ENCODE measurements at regions of chr9 and their contacts with region 1.

Region 1: GRCh38 chr9:137423004-137423874 is at the starts of genes EXD3 and NOXA1:
- DNase-seq: peak; percentile 91 to 94 (median 94)
- H3K4me3 ChIP-seq: peak within 1 kb of the TSS; percentile 69 to 90 (median 83)
- H3K27ac ChIP-seq: peak within 1 kb of the TSS; percentile 15 to 73
- H3K4me1 ChIP-seq: peaks cover 13 to 26% (median 22%) of the 10 kb centered on the region in 4 experiments
- H3K27me3 ChIP-seq: no peaks in the 10 kb centered on the region

Region 2: DNA sequence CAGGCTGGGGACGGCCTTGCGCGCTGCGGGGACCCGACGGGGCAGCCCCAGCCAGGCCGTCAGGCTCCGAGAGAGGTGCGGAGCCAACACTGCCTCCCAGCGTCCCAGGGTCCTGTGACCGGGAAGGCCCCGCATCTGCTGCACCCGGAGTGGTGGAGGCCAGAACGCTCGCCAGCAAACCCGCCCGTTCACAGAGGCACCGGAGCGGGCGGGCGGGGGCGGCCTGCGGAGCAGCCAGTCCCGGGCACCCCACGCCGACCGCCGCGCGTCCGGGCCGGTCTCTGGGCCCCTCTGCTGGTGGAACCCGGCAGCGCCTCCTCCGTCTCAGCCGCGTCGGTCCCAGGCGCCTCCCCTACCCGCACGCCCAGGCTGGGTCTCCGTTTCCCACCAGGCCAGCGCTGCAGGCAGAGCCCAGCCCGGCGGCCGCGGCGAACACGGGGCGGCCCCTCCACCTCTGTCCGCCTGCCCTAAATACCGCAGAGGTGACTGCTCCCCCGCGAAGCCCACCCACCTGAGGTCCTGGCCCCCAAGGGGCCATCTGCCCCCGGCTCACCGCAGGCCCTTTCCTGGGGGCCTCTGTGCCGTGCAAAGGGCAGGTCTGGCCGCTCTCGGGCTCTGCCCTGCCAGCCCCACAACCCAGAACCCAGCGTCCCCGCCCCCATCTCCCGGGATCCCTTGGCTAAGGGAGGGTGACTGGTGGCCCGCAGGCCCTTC is 16.2 kb before region 1 on chr9:
- CTCF ChIA-PET with region 1: interaction called, 15 read pairs
- POLR2A ChIA-PET with region 1: no interaction called
- DNase-seq: peak; percentile 63 to 83 (median 80)
- H3K4me3 ChIP-seq: peak overlapping the region in 5 of 7 experiments; percentile 4 to 61 (median 48)
- H3K27ac ChIP-seq: no peak overlapping the region
- H3K4me1 ChIP-seq: peaks cover 0 to 39% (median 37%) of the 10 kb centered on the region in 4 experiments
- H3K27me3 ChIP-seq: no peaks in the 10 kb centered on the region

Region 3: DNA sequence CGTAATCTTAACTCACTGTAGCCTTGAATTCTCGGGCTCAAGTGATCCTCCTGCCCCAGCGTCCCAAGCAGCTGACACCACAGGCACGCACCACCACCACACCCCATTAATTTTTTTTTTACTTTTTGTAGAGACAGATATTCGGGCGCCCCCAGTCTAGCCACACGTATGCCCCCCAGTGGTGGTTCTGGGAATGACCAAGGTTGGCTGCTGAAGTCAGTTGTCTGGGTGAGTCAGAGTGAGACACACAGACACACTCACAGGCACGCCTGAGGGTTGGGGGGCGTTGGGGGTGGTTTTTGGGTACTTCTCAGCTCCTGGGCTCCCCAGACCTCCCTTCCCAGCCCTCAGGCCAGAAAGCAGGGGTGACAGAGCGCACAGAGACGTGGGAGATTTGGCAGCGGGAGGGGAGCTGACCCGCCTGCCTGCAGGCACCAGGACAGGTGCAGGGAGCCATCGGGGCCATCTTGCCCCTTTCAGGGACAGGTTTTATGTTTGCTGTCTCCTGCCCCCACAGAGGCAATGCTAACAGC is 22.1 kb after region 1 on chr9:
- CTCF ChIA-PET with region 1: interaction called, 33 read pairs
- POLR2A ChIA-PET with region 1: interaction called, 3 read pairs
- DNase-seq: peak; percentile 81 to 93 (median 90)
- H3K4me3 ChIP-seq: peak overlapping the region in 1 of 7 experiments; percentile 16
- H3K27ac ChIP-seq: no peak overlapping the region
- H3K4me1 ChIP-seq: peaks cover 0 to 32% (median 11%) of the 10 kb centered on the region in 4 experiments
- H3K27me3 ChIP-seq: peaks cover 0 to 2% (median 0%) of the 10 kb centered on the region in 5 experiments

Measured in common myeloid progenitor, CD34-positive (primary cell).